Panc1 (cell line): ENCODE measurements at regions of chr19 and their contacts with region 1.

Region 1: DNA sequence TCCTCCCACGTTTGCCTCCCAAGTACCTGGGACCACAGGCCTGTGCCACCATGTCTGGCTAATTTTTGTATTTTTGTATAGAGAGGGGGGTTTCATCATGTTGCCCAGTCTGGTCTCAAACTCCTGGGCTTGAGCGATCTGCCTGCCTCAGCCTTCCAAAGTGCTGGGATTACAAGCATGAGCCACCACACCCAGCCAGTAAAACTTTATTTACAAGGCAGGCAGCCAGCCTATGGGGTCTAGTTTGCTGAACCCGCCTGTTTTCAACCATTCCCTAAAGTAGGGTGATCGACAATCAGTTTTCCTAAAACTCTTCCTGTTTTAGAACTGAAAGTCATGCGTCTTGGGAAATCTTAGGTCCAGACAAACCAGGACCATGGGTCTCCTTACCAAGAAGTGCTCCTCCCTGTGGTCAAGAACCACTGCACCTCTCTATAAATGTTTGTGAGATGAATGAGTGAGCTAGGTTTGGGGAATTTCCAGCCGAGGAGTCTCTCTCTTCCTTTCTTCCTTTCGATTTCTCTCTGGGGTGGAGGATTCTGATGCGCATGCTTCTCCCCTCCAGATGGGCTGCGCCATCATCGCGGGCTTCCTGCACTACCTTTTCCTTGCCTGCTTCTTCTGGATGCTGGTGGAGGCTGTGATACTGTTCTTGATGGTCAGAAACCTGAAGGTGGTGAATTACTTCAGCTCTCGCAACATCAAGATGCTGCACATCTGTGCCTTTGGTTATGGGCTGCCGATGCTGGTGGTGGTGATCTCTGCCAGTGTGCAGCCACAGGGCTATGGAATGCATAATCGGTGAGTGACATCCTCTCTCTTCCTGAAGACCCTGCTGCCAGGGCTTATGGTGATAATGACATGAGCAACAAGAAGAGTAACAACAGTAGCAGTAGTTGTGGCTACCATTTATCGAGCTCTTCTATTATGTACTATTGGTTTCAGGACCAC is 38.7 kb downstream of the ADGRE1 start:
- DNase-seq: no peak
- ATAC-seq: 0 out of 2 replicates have a peak, but pooled peaks have one; percentile 58
- H3K4me3 ChIP-seq: peak overlapping the region in 1 of 2 experiments; percentile 20; a peak in 1 of 4 replicates
- H3K27ac ChIP-seq: no peak overlapping the region
- H3K4me1 ChIP-seq: no peaks in the 10 kb centered on the region
- H3K27me3 ChIP-seq: no peaks in the 10 kb centered on the region
- CTCF ChIP-seq: peak; percentile 48

Region 2: DNA sequence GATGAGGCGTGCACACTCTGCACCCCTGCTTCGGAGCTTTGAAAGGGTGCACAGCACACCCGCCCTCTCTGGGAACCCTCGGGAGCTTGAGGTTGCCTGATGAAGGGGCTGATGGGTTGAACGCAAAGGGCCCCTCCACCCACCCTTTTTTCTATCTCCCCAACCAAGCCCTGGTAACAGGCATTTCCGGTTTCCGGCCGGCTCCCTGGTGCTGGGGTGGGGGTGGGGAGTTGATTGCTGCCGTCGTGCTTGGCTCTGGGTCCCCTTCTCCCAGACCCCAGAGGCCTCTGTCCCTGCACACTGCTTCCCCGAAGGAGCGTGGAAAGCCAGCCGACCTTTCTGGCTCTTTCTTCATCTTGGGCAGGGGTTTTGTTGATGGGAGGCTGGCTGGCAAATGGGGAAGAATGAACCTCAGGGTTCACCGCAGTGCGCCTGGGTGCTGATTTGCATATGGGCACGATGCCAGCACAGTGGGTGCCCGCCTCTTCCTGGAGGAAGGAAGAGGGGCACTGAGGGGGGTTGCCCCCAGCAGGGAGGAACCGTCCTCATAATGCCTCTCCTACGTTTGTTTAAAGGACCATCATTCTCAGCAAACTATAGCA is 124.5 kb before region 1 on chr19:
- CTCF ChIA-PET with region 1: no interaction called
- POLR2A ChIA-PET with region 1: no interaction called
- in situ Hi-C with region 1: no loop called
- intact Hi-C with region 1: no loop called
- DNase-seq: no peak
- ATAC-seq: peak; percentile 29; the same call in 1 of the 2 replicates
- H3K4me3 ChIP-seq: peak overlapping the region in 1 of 2 experiments; percentile 38; a peak in 2 of 4 replicates
- H3K27ac ChIP-seq: no peak overlapping the region; the same call in 1 of the 2 replicates
- H3K4me1 ChIP-seq: no peaks in the 10 kb centered on the region
- H3K27me3 ChIP-seq: no peaks in the 10 kb centered on the region
- CTCF ChIP-seq: no peak

Region 3: GRCh38 chr19:7669641-7670040 is 743.6 kb after region 1 on chr19:
- CTCF ChIA-PET with region 1: interaction called, 20 read pairs
- POLR2A ChIA-PET with region 1: no interaction called
- in situ Hi-C with region 1: no loop called
- intact Hi-C with region 1: no loop called
- DNase-seq: no peak
- ATAC-seq: no peak
- H3K4me3 ChIP-seq: no peak overlapping the region
- H3K27ac ChIP-seq: no peak overlapping the region
- H3K4me1 ChIP-seq: no peaks in the 10 kb centered on the region
- H3K27me3 ChIP-seq: no peaks in the 10 kb centered on the region
- CTCF ChIP-seq: no peak